Sigmoid colon (tissue), 7 donors: ENCODE measurements at regions of chr21 and their contacts with region 1.

Region 1: GRCh38 chr21:29164325-29164942 is 34.0 kb downstream of the MAP3K7CL start:
- DNase-seq: no peak
- H3K4me3 ChIP-seq: no peak overlapping the region
- H3K27ac ChIP-seq: peak overlapping the region in 1 of 4 donors; percentile 17
- H3K4me1 ChIP-seq: peaks cover 0 to 22% (median 11%) of the 10 kb centered on the region in 4 donors
- H3K27me3 ChIP-seq: no peaks in the 10 kb centered on the region
- CTCF ChIP-seq: peak; percentile 31 to 75 (median 64)
- EP300 ChIP-seq: no peak
- POLR2A ChIP-seq: no peak

Region 2: GRCh38 chr21:29091032-29091431 is 73.4 kb before region 1 on chr21:
- intact Hi-C with region 1: loop called (anchors 5 kb)
- DNase-seq: no peak
- H3K4me3 ChIP-seq: no peak overlapping the region
- H3K27ac ChIP-seq: peak overlapping the region in 1 of 4 donors; percentile 55
- H3K4me1 ChIP-seq: peaks cover 0 to 36% (median 21%) of the 10 kb centered on the region in 4 donors
- H3K27me3 ChIP-seq: no peaks in the 10 kb centered on the region
- CTCF ChIP-seq: no peak
- EP300 ChIP-seq: no peak
- POLR2A ChIP-seq: no peak

Region 3: DNA sequence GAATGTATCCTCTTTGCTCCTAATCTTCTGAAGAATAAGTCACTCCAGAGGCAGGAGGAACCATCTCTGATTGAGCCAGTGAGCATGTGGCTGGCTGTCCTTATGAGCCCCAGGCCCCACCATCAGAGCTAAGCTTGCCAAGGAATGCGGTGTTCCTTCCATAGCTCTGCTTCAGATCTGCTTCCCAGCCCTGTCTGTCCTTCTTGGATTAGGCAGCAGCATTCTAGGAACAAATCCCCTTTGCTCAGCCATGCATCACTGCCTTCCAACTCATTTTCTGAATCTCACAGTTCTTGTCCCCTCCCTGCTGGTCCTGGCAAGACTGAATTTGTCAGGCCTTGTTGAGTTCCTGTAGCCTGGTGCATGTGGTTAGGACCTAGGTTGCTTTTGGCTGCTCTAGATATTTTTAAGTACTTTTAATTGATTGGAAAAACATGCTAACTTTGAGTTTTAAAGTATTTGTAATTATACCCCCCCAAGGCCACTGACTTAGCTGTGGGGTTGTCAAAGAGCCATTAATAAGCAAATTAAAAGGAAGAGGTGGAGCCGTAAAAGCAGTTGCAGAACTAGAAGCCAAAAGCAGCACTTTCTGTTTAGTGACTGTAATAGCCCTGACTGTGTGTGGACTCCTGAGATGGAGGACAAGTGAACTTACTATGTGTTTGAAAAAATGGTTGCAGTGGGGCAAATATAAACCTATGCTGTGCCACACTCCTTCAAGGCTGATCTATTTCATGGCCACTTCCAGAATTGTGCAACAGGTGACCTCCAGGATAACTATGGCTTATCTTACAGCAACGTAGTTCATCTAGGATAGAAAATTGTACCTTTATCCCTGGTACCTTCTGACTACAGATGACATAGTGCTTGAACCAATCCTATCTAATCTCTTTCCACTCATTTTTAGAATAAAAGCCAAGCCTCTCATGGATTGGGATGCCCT is 72.9 kb after region 1 on chr21:
- intact Hi-C with region 1: no loop called
- DNase-seq: no peak
- H3K4me3 ChIP-seq: no peak overlapping the region
- H3K27ac ChIP-seq: peak overlapping the region; percentile 55 to 77 (median 65)
- H3K4me1 ChIP-seq: peaks cover 0 to 40% (median 36%) of the 10 kb centered on the region in 4 donors
- H3K27me3 ChIP-seq: no peaks in the 10 kb centered on the region
- CTCF ChIP-seq: no peak
- EP300 ChIP-seq: peak in 1 of 4 donors; percentile 16
- POLR2A ChIP-seq: no peak

Region 4: GRCh38 chr21:29349702-29350101 is 185.3 kb after region 1 on chr21:
- intact Hi-C with region 1: loop called (anchors 2 kb)
- DNase-seq: no peak
- H3K4me3 ChIP-seq: no peak overlapping the region
- H3K27ac ChIP-seq: no peak overlapping the region
- H3K4me1 ChIP-seq: peaks cover 0 to 52% (median 37%) of the 10 kb centered on the region in 4 donors
- H3K27me3 ChIP-seq: no peaks in the 10 kb centered on the region
- CTCF ChIP-seq: no peak
- EP300 ChIP-seq: no peak
- POLR2A ChIP-seq: no peak

Region 5: DNA sequence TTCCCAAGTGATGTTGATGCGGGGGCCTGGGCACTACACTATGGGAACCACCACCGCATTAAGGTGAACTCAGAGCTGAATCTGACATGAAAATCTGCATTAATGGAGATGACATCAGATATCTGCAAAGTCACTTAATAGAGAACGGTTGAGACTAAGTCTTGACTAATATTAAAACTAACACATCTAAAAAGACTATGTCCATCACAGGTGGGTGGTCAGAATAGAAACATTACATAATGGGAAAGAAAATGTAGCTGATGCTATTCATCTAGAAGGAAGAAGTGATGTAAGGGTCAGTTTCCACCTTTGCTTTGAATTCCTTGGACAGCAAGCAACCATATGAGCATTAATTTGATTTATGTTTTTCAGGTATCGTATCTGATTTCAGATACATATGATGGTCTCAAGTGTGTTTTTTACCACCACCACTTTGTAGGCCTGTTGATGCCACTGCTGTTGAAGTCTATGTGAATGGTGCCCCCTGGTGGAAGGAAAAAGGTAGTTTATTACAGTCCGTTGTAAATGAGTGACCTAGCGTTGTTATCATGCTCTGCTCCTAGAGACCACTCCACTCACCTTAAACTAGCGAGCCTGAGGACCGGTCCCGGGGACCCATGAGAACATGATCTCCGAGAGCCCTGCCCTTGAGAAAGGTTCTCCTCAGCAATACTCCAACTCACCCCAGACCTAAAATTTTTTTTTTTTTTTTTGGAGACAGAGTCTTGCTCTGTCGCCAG is 207.8 kb after region 1 on chr21:
- intact Hi-C with region 1: loop called (anchors 1 kb)
- DNase-seq: peak; percentile 64
- H3K4me3 ChIP-seq: no peak overlapping the region
- H3K27ac ChIP-seq: no peak overlapping the region
- H3K4me1 ChIP-seq: no peaks in the 10 kb centered on the region
- H3K27me3 ChIP-seq: no peaks in the 10 kb centered on the region
- CTCF ChIP-seq: peak; percentile 65 to 82 (median 76)
- EP300 ChIP-seq: no peak
- POLR2A ChIP-seq: no peak